ENCODE measurements at regions of chr11 and their contacts with region 1.

Region 1: GRCh38 chr11:85826116-85826855 is 15.3 kb upstream of the SYTL2 start:
- DNase-seq: peak; percentile 40
- ATAC-seq: peak; percentile 60

Region 2: DNA sequence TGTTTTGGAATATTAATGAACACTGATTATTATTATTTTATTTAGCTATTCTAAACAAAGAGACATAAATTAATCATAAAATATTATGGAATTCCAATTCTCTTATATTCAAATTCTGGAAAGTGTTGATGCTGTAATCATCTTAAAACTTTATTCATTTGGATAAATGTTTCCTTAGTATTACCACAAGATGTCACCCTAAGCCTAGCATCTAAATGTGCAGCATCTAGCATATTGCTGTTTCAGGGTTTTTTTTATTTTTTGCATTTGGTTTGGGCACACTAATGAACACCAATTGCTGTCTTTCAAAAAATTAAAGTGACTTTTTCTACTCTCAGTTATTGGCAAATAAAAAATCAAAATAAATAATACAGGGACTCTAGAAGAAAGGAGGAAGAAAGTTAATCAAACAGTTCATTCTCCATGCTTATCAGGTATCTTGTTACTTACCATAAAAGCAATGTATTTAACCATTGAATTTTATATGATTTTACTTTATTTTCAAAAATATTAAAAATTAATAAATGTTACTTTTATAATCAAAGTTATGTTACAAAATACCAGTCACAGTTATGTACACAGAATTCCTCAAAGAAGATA is 230.9 kb before region 1 on chr11:
- intact Hi-C with region 1: loop called (anchors 10 kb)
- DNase-seq: no peak
- ATAC-seq: no peak

Region 3: DNA sequence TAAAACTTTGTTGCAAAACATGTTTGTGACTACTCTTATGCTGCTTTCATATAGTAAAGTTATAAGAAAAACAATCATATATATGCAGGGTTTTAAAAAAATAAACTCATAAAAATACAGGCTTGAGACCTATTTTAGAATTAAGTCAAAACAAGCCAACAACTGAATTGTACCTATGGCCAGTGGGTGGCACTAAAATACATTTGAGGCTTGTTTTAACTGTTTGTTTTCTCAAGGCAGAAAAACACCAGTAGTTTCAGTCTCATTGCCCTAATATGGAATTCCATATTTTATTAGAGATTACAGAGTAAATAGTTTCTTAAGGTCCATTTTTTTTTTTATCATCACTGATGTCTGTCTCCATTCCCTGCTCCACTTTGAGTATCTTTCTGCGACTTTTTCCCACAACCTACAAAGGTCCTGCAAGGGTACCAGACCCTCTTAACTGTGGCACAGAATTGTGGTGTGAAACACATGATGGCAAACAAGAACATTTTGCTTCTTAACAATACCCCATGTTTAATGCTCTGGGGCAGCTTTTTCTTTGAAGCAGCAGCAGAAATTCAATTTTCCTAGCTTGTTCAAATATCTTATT is 131.8 kb before region 1 on chr11:
- intact Hi-C with region 1: loop called (anchors 10 kb)
- DNase-seq: no peak
- ATAC-seq: no peak